Heart right ventricle (tissue), 16 donors: ENCODE measurements at regions of chr9 and their contacts with region 1.

Region 1: DNA sequence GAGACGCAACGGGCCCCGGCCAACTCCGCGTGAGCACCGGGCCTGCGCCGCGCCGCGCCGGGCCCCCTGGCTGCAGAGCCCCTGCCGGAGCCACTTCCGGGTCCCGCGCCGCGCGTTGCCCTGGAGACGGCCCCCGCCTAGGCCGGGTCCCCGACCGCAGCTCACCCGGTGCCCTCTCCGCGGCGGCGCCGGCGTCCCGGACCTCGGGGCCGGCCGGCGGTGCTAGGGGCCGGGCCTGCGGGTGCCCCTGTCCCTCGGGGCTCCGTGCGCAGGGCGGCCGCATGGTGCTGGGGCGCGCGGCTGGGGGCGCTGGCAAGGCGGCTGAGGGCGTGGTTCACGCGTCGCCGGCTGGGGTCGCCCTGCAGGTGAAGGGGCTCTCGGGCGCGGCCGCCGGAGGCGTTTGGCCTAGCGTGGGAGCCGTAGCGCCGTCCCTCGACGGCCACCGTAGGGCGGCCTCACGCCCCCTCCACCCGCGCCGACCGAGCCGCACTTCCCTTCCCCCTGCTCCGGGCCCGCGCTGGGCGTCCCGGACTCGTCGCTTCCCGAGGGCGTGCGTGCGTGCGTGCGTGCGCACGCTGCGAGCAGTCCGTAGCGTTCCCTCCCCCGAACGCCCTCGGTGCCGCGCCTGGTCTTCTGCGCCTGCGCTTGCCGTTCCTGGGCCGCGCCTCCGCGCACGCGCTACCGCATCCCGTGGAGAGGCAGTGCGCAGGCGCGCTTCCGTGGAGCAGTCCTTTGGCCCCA is at the start of gene TMEM250:
- DNase-seq: peak; percentile 95 to 99
- ATAC-seq: peak; percentile 90 to 95 (median 92)
- H3K4me3 ChIP-seq: peak within 1 kb of the TSS; percentile 52 to 90 (median 74)
- H3K27ac ChIP-seq: peak within 1 kb of the TSS; percentile 81 to 99 (median 97)
- H3K4me1 ChIP-seq: peaks cover 6 to 42% (median 34%) of the 10 kb centered on the region in 9 donors
- H3K27me3 ChIP-seq: no peaks in the 10 kb centered on the region
- CTCF ChIP-seq: peak in 4 of 9 donors; percentile 12 to 27 (median 22)
- total RNA-seq, gene TMEM250: 12.7 to 24.3 (median 15.4) TPM

Region 2: DNA sequence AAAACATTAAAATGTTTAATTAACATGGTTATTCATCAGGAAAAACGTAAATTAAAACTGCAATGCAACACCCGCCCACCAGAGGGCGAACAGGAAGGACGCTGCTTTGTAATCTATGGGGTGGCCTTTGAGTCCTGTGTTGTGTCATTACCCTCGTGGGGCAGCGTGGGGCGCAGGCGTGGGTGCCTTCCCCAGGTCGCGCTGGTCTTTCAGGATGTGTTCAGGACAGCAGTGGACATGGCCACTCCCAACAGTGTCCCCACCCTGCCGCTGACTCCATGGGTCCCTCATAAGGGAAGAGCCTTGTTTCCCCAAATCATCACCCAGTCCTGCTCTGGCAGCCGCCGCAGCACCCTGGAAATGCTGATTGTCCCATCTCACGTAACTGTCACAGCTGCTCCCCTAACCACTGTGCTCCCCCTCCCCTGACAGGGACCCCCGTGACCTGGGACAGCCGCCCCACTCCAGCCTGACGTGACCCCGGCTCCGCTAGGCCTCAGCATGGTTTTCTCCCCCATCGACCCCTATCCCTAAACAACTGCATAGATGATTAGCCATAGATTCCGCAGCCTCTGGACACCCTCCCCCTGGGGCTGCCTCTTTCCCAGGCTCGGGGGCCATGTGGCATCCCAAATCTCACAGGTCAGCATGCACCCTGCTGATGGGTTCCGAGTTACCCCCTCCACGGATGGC is 515.6 kb before region 1 on chr9:
- intact Hi-C with region 1: loop called in 5 of 10 experiments (anchors 5 to 10 kb)
- DNase-seq: no peak
- ATAC-seq: peak in 3 of 8 donors; percentile 34 to 42 (median 35)
- H3K4me3 ChIP-seq: no peak overlapping the region
- H3K27ac ChIP-seq: no peak overlapping the region
- H3K4me1 ChIP-seq: no peaks in the 10 kb centered on the region
- H3K27me3 ChIP-seq: peaks cover 0 to 28% (median 11%) of the 10 kb centered on the region in 7 donors
- CTCF ChIP-seq: peak; percentile 66 to 80 (median 75)

Region 3: GRCh38 chr9:135797507-135798262 is 320.8 kb before region 1 on chr9:
- intact Hi-C with region 1: loop called in 3 of 10 experiments (anchors 5 to 10 kb)
- DNase-seq: peak; percentile 62 to 68
- ATAC-seq: peak; percentile 74 to 95 (median 84)
- H3K4me3 ChIP-seq: no peak overlapping the region
- H3K27ac ChIP-seq: peak overlapping the region in 5 of 10 donors; percentile 6 to 36 (median 29)
- H3K4me1 ChIP-seq: peaks cover 6 to 19% (median 11%) of the 10 kb centered on the region in 9 donors
- H3K27me3 ChIP-seq: peaks cover 0 to 5% (median 0%) of the 10 kb centered on the region in 7 donors
- CTCF ChIP-seq: peak; percentile 31 to 77 (median 73)

Region 4: GRCh38 chr9:135864447-135865049 is 253.9 kb before region 1 on chr9:
- intact Hi-C with region 1: loop called in 9 of 10 experiments (anchors 2 to 10 kb)
- DNase-seq: peak; percentile 66 to 71
- ATAC-seq: peak in 6 of 8 donors; percentile 11 to 77 (median 38)
- H3K4me3 ChIP-seq: no peak overlapping the region
- H3K27ac ChIP-seq: no peak overlapping the region
- H3K4me1 ChIP-seq: peaks cover 0 to 12% (median 6%) of the 10 kb centered on the region in 9 donors
- H3K27me3 ChIP-seq: no peaks in the 10 kb centered on the region
- CTCF ChIP-seq: peak; percentile 71 to 92 (median 86)

Region 5: GRCh38 chr9:135961277-135961705 is 157.2 kb before region 1 on chr9 and contains the start of gene UBAC1:
- intact Hi-C with region 1: loop called in 5 of 10 experiments (anchors 1 to 2 kb)
- DNase-seq: peak; percentile 95 to 97
- ATAC-seq: peak; percentile 84 to 96 (median 93)
- H3K4me3 ChIP-seq: peak within 1 kb of the TSS; percentile 53 to 97 (median 90)
- H3K27ac ChIP-seq: peak within 1 kb of the TSS; percentile 81 to 98 (median 96)
- H3K4me1 ChIP-seq: peaks cover 4 to 47% (median 38%) of the 10 kb centered on the region in 9 donors
- H3K27me3 ChIP-seq: no peaks in the 10 kb centered on the region
- CTCF ChIP-seq: peak; percentile 17 to 67 (median 51)
- total RNA-seq, gene UBAC1: 73.8 to 138 (median 85.4) TPM

Region 6: DNA sequence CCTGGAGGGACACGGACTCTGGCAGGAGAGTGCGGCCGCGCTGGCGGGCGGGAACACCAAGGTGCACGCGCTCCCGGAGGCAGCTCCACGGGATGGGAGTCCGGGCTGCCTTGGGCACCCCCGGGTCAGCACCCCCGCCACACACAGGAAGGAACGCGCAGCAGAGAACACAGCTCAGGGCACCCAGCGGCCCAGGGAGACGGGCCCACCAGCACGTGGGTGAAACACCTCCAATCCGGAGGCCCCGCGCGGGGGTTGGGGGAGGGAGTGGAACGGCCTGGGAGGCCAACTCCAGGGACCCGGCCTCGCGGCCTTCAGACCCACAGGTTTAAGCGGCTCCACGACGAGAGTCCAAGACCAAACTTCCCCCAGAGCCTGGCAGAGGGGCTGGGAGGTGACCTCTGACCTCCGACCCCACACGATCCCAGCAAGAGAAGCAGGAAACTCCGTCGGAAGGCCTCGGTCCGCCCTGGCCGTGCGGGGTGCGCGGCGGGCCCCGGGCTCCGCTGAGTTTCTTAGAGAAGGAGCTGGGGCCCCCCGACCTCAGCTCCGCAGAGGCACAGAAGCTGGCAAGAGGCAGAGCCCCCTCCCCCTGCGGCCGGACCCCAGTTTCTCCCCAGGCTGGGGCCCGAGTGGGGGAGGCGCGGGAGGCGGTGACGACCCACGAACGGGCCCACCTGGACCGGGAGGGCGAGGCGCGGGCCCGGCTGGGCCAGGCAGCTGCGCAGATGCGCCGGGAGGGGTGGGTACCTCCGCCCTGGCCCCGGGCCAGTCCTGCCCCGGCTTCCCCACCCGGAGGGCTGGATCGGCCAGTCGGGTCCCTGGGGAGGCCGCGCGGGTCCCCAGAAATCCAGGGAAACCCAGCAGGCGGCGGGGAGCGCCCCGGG is 24.3 kb before region 1 on chr9:
- intact Hi-C with region 1: loop called in 6 of 10 experiments (anchors 1 to 5 kb)
- DNase-seq: peak; percentile 83 to 85
- ATAC-seq: peak; percentile 53 to 84 (median 74)
- H3K4me3 ChIP-seq: peak overlapping the region; percentile 68 to 94 (median 86)
- H3K27ac ChIP-seq: peak overlapping the region; percentile 93 to 99 (median 96)
- H3K4me1 ChIP-seq: peaks cover 15 to 71% (median 67%) of the 10 kb centered on the region in 9 donors
- H3K27me3 ChIP-seq: peaks cover 0 to 7% (median 0%) of the 10 kb centered on the region in 7 donors
- CTCF ChIP-seq: peak in 3 of 9 donors; percentile 14 to 27 (median 22)

Region 7: GRCh38 chr9:136316896-136317676 is 198.6 kb after region 1 on chr9:
- intact Hi-C with region 1: no loop called
- DNase-seq: peak in 1 of 2 donors; percentile 4
- ATAC-seq: no peak
- H3K4me3 ChIP-seq: no peak overlapping the region
- H3K27ac ChIP-seq: no peak overlapping the region
- H3K4me1 ChIP-seq: no peaks in the 10 kb centered on the region
- H3K27me3 ChIP-seq: peaks cover 0 to under 1% (median 0%) of the 10 kb centered on the region in 7 donors
- CTCF ChIP-seq: no peak